HEK293 (cell line): ENCODE measurements at regions of chr20 and their contacts with region 1.

Region 1: DNA sequence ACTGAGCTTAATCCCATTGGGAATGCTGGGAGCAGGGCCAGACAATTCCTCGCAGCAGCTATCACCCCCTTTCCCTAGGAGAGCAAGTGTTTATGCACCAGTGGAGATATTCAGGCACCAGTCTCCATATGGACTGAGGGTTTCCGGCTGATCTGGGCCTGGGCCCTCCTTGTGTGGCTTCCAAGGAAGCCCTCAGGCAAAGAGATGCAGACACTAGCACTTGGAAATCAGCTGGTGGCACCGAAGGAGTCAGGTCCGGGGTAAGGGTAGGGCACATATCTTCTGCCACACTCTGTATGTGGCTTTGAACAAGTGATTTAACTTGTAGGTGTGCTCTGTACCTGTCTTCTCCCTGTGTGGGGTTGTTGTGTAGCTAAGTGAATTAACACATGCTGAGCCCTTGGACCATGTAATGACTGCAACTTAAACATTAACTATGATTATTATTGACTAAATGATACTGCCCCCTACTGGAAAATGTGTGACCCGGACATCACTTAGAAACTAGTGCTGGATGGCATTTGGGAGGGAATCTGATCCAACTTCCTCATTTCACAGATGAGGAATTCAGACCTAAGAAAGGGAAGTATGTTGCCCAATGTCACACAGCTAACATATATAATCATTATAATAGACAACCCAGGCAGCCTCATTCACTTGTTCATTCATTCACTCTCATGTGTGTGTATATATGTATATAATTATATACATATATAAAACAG is 19.3 kb upstream of the WFDC2 start:
- H3K4me3 ChIP-seq: no peak overlapping the region
- H3K27ac ChIP-seq: no peak overlapping the region
- H3K4me1 ChIP-seq: no peaks in the 10 kb centered on the region
- CTCF ChIP-seq: peak; percentile 24; the same call in 1 of the 2 replicates

Region 2: GRCh38 chr20:45174434-45175364 is 275.6 kb before region 1 on chr20 and contains the start of gene PI3:
- CTCF ChIA-PET with region 1: no interaction called
- POLR2A ChIA-PET with region 1: no interaction called
- H3K4me3 ChIP-seq: no peak within 1 kb of the TSS
- H3K27ac ChIP-seq: no peak within 1 kb of the TSS
- H3K4me1 ChIP-seq: no peaks in the 10 kb centered on the region
- CTCF ChIP-seq: no peak

Region 3: DNA sequence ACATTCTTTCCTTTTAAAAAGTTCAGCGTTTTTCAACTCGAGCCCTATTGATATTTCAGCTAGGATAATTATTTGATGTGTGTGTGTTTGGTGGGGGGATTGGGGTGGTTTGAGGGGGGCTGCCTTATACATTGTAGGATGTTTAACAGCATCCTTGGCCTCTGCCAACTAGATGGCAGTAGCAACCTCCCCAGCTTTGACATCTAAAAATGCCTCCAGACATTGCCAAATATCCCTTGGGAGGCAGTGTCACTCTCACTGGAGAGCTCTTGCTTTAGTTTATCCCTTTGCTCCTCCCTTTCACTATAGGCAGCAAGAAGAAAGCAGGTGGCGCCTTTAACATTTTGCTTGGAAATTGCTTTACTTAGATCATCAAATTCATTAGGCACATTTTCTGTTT is 57.5 kb before region 1 on chr20:
- CTCF ChIA-PET with region 1: interaction called, 12 read pairs
- POLR2A ChIA-PET with region 1: no interaction called
- H3K4me3 ChIP-seq: no peak overlapping the region
- H3K27ac ChIP-seq: no peak overlapping the region
- H3K4me1 ChIP-seq: no peaks in the 10 kb centered on the region
- CTCF ChIP-seq: peak; percentile 45

Region 4: GRCh38 chr20:45462711-45463509 is 12.7 kb after region 1 on chr20:
- CTCF ChIA-PET with region 1: interaction called, 17 read pairs
- POLR2A ChIA-PET with region 1: no interaction called
- H3K4me3 ChIP-seq: no peak overlapping the region
- H3K27ac ChIP-seq: no peak overlapping the region
- H3K4me1 ChIP-seq: no peaks in the 10 kb centered on the region
- CTCF ChIP-seq: no peak